ENCODE measurements at regions of chr3 and their contacts with region 1.

Region 1: DNA sequence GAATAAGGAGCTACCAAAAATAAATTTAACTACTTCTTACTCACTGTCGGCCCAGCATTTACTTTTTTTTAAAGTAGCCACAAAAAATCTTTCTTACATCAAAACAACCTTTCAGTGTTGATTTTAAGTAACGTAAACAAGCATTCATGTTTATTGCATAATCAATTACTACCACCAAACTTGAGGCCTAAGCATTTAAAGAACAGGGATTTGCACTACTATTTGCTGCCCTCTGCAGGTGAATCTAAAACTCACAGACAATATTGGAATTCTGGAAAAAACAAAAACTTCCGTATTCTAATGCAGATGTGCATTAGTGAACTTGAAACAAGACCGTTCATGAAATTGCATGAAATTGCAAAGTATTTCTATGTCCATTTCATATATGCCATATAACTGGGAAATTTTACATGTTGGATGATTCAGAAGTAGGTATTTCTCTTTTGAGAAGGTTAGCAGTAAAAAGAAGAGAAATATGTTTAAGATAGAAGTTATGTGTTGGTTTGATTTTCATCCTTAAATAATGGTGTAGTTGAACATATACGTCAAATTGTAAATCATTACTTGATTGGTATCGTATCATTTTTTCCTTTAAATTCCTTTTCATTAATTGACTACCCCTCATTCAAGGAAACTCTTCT is 55.6 kb downstream of the CGGBP1 start:
- DNase-seq: no peak
- H3K4me3 ChIP-seq: no peak overlapping the region
- H3K27ac ChIP-seq: no peak overlapping the region
- H3K4me1 ChIP-seq: no peaks in the 10 kb centered on the region
- H3K27me3 ChIP-seq: no peaks in the 10 kb centered on the region
- CTCF ChIP-seq: peak; percentile 27 to 67 (median 59)

Region 2: DNA sequence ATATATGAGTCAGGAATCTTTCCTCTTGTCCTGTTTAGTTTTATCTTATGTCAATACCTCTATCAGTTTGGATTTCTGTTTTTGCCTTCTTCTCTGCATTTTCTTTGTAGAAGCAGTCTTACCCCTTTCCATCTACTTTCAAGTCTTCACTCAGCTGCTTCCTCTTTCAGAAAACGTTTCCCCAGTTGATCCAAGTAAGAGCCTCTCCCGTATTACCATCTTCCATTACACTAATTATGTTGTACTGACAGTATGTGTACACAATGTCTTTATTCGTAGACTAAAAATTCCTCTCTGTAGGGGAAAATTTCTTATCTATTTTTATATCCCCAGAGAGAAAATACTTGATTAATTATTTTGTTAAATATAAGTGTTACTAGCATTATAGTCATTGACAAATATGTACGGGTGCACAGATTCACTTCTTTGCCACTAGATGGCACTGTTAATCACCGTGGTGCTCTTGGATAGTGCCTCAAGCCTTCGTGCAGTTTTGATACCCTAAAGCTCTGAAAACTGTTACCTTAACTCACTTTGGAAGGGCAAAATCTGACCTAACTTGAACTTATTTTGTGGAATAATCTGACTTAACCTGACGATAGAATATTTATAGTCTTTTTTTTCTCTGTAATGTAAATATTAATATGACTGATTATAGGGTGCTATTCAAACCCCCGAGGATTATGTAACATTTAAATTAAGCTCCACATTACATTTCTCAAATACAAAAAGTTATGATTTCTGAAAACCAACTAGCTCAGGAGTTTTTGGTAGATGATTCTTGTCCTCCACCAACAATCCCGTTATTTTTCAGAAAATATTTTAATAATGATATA is 652.7 kb before region 1 on chr3:
- intact Hi-C with region 1: loop called (anchors 2 kb)
- DNase-seq: no peak
- H3K4me3 ChIP-seq: no peak overlapping the region
- H3K27ac ChIP-seq: no peak overlapping the region
- H3K4me1 ChIP-seq: no peaks in the 10 kb centered on the region
- H3K27me3 ChIP-seq: no peaks in the 10 kb centered on the region
- CTCF ChIP-seq: peak; percentile 48 to 83 (median 78)

Region 3: DNA sequence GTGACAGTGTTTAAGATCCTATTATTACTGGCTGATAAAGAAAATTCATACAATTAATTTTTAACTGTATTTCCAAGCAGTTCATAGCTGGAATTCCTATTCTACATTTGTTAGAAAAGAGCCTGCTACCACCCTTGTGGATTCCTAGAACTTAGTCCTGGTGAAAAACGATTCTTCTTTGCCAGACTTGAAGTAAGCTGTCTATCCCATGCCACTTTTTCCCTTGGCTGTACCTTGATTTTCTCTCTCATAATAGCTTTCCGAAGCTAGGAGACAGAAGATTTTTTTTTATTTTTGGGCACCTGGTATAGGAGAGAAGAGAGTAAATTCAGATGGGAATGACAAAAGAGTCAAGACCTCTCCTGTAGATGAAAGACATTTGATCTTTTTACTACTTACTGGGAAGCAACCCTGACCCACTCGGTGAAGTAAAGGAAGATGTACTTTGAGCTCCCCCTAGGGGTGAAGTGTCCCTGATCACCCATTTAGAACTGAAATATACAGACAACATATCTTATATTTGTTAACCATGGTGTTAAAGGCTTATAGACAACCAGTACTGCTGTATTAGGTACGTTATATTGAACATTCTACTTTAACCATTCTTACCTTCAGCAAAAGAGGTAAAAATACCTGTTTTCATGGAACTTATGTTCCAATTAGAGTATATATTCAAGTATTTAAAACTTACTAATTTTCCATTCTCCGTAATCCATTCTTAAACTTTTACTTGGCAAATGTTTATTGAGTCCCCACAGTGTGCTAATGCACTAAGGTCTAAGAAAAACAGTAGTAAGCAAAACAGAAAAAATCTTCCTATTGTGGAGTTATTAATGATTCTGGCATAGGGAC is 110.3 kb after region 1 on chr3:
- intact Hi-C with region 1: loop called (anchors 10 kb)
- DNase-seq: peak in 1 of 2 donors; percentile 77
- H3K4me3 ChIP-seq: no peak overlapping the region
- H3K27ac ChIP-seq: no peak overlapping the region
- H3K4me1 ChIP-seq: peaks cover 0 to 4% of the 10 kb centered on the region in 2 donors
- H3K27me3 ChIP-seq: no peaks in the 10 kb centered on the region
- CTCF ChIP-seq: peak; percentile 32 to 73 (median 67)

Measured in ascending aorta (tissue), 2 donors.